PC-9 (cell line): ENCODE measurements at regions of chr4 and their contacts with region 1.

Region 1: GRCh38 chr4:14719053-14719452 is 283.2 kb upstream of the CPEB2 start:
- DNase-seq: peak; percentile 70 to 77
- H3K4me3 ChIP-seq: no peak overlapping the region
- H3K27ac ChIP-seq: no peak overlapping the region
- H3K4me1 ChIP-seq: peaks cover 18% of the 10 kb centered on the region
- H3K27me3 ChIP-seq: no peaks in the 10 kb centered on the region
- CTCF ChIP-seq: no peak

Region 2: GRCh38 chr4:13907255-13907751 is 811.8 kb before region 1 on chr4:
- CTCF ChIA-PET with region 1: no interaction called
- POLR2A ChIA-PET with region 1: no interaction called
- intact Hi-C with region 1: no loop called
- DNase-seq: peak; percentile 63 to 99
- H3K4me3 ChIP-seq: no peak overlapping the region
- H3K27ac ChIP-seq: peak overlapping the region; percentile 94
- H3K4me1 ChIP-seq: peaks cover 25% of the 10 kb centered on the region
- H3K27me3 ChIP-seq: no peaks in the 10 kb centered on the region
- CTCF ChIP-seq: peak; percentile 61

Region 3: DNA sequence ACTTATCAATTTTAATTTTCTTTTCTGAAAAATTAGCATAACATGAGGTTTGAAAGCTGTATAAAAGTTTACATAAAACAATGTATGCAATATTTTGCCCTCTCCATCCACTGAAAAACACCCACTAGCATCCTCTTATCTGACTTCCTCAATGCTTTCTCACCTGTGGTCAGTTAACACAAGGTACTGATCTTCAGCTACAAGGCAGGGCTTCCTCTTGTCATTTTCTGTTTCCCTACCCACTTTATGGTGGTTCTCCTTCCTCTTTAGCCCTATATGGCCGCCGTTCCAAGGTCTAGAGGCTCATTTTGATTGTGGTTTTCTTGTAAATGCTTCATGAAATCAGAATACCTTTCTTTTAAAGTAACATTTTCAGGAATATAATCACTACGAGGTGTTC is 335.4 kb before region 1 on chr4:
- CTCF ChIA-PET with region 1: no interaction called
- POLR2A ChIA-PET with region 1: no interaction called
- intact Hi-C with region 1: no loop called
- DNase-seq: no peak
- H3K4me3 ChIP-seq: no peak overlapping the region
- H3K27ac ChIP-seq: no peak overlapping the region
- H3K4me1 ChIP-seq: no peaks in the 10 kb centered on the region; the same call in 1 of the 2 replicates
- H3K27me3 ChIP-seq: no peaks in the 10 kb centered on the region
- CTCF ChIP-seq: no peak

Region 4: GRCh38 chr4:14583331-14583730 is 135.7 kb before region 1 on chr4:
- CTCF ChIA-PET with region 1: no interaction called
- POLR2A ChIA-PET with region 1: no interaction called
- intact Hi-C with region 1: loop called (anchors 10 kb)
- DNase-seq: peak; percentile 26 to 71
- H3K4me3 ChIP-seq: no peak overlapping the region
- H3K27ac ChIP-seq: no peak overlapping the region
- H3K4me1 ChIP-seq: peaks cover 15% of the 10 kb centered on the region; the same call in 1 of the 2 replicates
- H3K27me3 ChIP-seq: no peaks in the 10 kb centered on the region
- CTCF ChIP-seq: no peak